HEK293 (cell line): ENCODE measurements at regions of chr10 and their contacts with region 1.

Region 1: DNA sequence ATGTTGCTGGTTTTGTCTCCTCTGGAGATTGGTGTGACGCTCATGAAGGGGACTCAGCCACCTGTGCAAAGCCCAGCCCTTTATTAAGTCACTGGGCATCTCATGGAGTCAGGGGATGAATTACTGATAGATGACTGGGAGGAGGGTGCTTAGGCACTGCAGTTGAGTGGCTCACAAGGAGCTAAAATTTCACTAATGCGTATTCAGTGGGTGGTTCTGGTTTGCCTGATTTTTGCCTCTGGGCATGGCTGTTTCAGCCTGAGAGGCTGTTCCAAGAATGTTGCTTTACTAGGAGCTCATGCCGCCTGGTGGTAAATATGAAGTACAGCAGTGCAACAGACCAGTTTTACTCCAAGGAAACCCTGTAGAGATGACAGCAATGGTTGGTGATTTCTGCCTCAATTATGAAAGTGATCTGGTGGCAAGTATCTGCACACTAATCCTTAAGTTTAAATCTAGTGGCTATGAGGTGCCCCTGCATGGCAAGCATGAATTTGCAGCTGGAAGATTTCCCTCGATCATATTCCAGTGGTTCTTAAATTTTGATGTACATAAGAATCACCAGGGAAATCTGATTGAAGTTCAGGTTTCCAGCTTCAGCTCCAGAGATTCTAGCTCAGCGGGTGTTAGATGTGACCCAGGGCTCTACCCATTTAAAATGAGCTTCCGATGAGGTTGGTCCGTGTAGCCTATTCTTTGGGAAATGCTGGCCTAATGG is 19.9 kb downstream of the ACTA2 start:
- H3K4me3 ChIP-seq: no peak overlapping the region
- H3K27ac ChIP-seq: no peak overlapping the region
- H3K4me1 ChIP-seq: peaks cover 5% of the 10 kb centered on the region; the same call in 1 of the 2 replicates
- CTCF ChIP-seq: peak; percentile 80

Region 2: GRCh38 chr10:88810196-88810961 is 122.3 kb before region 1 on chr10:
- CTCF ChIA-PET with region 1: interaction called, 11 read pairs
- POLR2A ChIA-PET with region 1: no interaction called
- H3K4me3 ChIP-seq: no peak overlapping the region
- H3K27ac ChIP-seq: no peak overlapping the region
- H3K4me1 ChIP-seq: no peaks in the 10 kb centered on the region
- CTCF ChIP-seq: peak; percentile 33; the same call in 1 of the 2 replicates

Region 3: GRCh38 chr10:88880282-88881076 is 52.2 kb before region 1 on chr10:
- CTCF ChIA-PET with region 1: interaction called, 5 read pairs
- POLR2A ChIA-PET with region 1: interaction called, 11 read pairs
- H3K4me3 ChIP-seq: peak overlapping the region; percentile 66
- H3K27ac ChIP-seq: peak overlapping the region; percentile 94
- H3K4me1 ChIP-seq: peaks cover 29% of the 10 kb centered on the region
- CTCF ChIP-seq: peak; percentile 93

Region 4: DNA sequence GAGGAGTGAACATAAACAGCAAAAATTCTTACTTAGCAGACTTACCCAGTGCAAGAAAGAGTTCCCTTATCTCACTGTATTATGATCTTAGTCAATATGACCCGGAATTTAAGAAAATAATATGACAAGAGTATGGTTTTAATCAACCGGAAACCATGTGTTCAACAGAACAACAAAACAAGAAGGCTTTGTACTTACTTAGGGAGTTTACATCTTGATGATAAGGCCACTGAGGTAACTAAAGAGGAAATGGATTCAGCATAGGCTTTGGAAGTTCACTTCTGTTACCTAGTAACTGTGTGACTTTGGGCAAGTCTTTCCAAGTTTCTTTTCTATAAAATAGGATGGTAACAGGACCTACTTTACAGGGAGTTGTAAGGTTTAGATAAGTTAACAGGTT is 50.5 kb after region 1 on chr10:
- CTCF ChIA-PET with region 1: interaction called, 137 read pairs
- POLR2A ChIA-PET with region 1: no interaction called
- H3K4me3 ChIP-seq: no peak overlapping the region
- H3K27ac ChIP-seq: no peak overlapping the region
- H3K4me1 ChIP-seq: peaks cover 11% of the 10 kb centered on the region
- CTCF ChIP-seq: no peak

Region 5: DNA sequence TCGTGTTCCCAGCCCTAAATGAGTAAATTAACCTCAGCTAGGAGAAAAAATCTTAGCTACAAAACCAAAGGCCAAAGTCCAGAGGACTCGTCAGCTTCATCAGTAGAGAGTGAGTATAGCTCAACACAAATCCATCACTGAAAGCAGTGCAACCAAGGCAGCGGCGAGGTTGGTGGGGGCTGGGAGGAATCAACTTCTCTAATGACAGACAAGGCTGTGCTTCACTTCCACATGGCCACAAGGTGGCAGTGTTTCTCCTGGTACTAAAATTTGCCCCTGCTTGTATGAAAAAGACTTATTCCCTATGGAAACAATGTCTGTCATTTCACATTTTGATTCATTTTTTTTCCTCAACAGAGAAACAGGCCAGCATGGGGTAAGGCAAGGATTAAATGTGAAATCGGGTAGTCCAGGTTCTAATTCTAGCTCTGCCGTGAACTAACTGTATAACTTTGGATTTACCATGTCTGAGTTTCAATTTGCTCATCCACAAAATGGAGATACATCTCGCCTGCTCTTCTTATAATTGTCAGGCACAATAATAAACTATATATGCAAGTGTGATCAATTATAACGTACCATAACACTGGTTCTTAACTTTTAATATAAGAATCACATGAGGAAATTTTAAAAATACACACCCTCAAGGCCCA is 97.2 kb after region 1 on chr10:
- CTCF ChIA-PET with region 1: interaction called, 48 read pairs
- POLR2A ChIA-PET with region 1: no interaction called
- H3K4me3 ChIP-seq: no peak overlapping the region
- H3K27ac ChIP-seq: no peak overlapping the region
- H3K4me1 ChIP-seq: 0 out of 2 replicates have a peak, but pooled peaks cover 8% of the 10 kb centered on the region
- CTCF ChIP-seq: peak; percentile 81

Region 6: DNA sequence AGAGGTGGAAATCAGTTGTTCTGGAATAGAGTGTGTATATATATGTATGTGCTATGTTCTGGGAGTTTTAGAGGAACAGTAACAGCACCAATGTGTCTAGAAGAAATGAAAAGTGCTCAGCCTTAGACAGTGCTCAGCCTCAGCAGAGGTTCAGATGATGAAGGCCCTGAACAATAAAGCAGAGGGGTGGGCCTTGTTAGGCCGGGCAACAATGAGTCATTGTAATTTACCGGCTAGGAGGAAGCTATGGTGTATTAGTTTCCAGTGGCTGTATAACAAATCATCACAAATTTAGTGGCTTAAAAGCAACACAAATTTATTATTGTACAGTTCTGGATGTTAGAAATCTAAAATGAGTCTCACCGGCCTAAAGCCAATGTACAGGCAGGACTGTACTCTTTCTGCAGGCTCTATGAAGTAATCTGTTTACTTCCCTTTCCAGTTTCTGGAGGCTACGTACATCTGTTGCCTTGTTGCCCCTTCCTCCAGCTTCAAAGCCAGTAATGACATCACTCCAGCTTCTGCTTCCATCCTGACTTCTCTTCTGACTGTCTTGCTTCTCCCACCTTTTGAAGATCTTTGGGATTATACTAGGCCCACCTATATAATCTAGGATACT is 189.8 kb after region 1 on chr10:
- CTCF ChIA-PET with region 1: no interaction called
- POLR2A ChIA-PET with region 1: no interaction called
- H3K4me3 ChIP-seq: no peak overlapping the region
- H3K27ac ChIP-seq: no peak overlapping the region
- H3K4me1 ChIP-seq: no peaks in the 10 kb centered on the region
- CTCF ChIP-seq: no peak